ENCODE measurements at regions of chr10 and their contacts with region 1.

Region 1: DNA sequence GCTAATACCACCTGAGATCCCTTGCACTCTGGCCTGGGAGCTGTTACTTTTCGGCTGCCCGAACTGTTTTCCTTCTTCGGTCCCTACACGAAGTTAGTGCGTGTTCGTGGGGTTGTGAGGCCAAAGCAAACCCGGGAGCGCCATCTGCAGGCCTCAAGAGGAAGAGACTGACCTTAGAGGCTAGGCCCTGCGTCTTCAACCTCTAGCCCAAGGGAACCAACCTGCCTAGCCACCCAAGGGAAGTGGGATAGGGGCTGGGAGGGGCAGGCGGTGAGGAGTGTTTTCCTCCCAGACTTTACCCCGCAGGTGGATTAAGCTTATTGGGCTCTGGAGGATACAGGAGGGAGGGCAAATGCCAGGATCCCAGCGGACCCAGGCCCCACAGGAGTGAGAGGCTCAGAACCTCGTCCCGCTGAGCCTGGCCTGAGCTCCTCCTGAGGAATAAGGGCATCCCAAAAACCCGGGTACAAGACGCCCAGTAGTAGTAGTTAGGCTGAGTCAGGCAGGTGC is 1.7 kb upstream of the PAX2 start:
- DNase-seq: no peak
- ATAC-seq: peak; percentile 53 to 81 (median 66)
- H3K4me3 ChIP-seq: no peak overlapping the region
- H3K27ac ChIP-seq: no peak overlapping the region
- H3K4me1 ChIP-seq: peaks cover 21% of the 10 kb centered on the region
- H3K27me3 ChIP-seq: peaks cover 3 to 99% (median 74%) of the 10 kb centered on the region in 3 donors
- CTCF ChIP-seq: peak; percentile 53

Region 2: GRCh38 chr10:98790802-98791201 is 1952.9 kb before region 1 on chr10:
- intact Hi-C with region 1: no loop called
- DNase-seq: no peak
- ATAC-seq: no peak
- H3K4me3 ChIP-seq: no peak overlapping the region
- H3K27ac ChIP-seq: no peak overlapping the region
- H3K4me1 ChIP-seq: no peaks in the 10 kb centered on the region
- H3K27me3 ChIP-seq: no peaks in the 10 kb centered on the region
- CTCF ChIP-seq: no peak

Region 3: DNA sequence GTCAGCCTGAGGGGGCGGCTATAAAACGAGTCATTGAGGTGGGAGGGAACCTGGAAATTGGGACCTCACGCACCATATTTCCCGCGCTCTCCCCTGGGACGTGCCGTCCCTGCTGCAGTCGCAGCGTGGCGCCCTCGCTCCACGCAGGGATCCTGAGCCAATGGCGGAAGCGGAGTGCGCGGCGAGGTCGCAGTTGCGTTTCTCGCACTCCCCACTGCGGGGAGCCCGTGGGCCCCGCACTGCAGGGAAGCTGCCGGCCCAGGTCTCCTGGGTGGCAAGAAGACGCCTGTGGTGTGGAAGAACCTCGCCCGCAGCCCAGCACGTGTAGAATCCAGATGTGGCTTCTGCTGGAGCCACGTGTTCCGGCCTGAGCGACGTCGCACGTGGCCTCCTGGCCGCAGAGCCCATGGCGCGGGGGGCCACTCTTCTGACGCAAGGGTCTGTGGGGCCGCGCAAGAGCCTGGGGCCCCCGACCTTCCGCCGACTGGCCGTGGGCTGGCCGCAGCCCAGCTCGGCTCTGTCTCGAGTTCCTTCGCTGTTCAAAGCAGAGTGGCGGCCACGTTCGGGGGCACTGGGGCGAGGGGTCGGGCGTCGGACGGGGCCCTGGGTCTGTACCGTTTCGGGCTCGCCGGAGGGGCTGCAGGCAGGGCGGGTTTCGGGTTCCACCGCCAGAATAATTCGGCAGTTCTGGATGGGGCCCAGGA is 181.5 kb before region 1 on chr10:
- intact Hi-C with region 1: loop called (anchors 5 to 10 kb)
- DNase-seq: peak; percentile 64 to 78
- ATAC-seq: peak; percentile 87 to 94 (median 91)
- H3K4me3 ChIP-seq: peak overlapping the region; percentile 28
- H3K27ac ChIP-seq: no peak overlapping the region
- H3K4me1 ChIP-seq: peaks cover 11% of the 10 kb centered on the region
- H3K27me3 ChIP-seq: peaks cover 0 to 54% (median 26%) of the 10 kb centered on the region in 3 donors
- CTCF ChIP-seq: peak; percentile 72

Region 4: DNA sequence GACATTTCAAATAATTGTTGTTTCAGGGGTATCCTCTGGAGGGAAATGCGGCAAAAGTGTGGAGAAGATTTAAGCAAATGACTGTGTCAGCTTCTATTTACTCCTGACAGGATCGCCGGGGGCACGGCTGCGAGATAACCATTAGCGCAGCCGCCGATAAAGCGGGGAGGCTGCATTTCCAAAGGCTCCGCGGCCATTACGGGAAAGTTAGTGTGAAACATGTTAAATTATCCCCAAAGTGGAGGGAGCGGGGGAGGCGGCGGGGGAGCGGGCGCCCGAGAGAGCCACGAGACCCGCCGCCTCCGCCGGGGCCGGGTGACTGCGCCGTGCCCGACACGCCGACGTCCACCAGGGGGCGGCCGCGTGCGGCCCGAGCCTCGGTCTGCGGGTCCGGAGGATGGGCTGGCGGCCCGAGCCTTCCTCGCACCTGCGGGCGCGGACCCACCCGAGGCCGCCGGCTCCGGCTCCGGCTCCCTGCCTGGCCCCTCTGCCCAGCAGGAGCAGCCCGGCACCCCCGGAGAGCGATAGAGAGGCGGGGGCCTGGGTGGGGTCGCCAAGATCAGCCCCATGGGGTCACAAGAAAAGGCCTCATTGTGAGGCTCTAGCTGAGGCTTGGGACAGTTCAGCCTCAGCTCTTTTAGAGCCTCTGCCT is 72.7 kb before region 1 on chr10:
- intact Hi-C with region 1: loop called in 1 of 2 experiments (anchors 2 kb)
- DNase-seq: peak in 1 of 2 donors; percentile 33
- ATAC-seq: peak; percentile 52 to 59 (median 55)
- H3K4me3 ChIP-seq: no peak overlapping the region
- H3K27ac ChIP-seq: no peak overlapping the region
- H3K4me1 ChIP-seq: no peaks in the 10 kb centered on the region
- H3K27me3 ChIP-seq: peaks cover 6 to 92% (median 25%) of the 10 kb centered on the region in 3 donors
- CTCF ChIP-seq: peak; percentile 72

Measured in psoas muscle (tissue), 8 donors.